GM23248 (cell line): ENCODE measurements at regions of chr4 and their contacts with region 1.

Region 1: DNA sequence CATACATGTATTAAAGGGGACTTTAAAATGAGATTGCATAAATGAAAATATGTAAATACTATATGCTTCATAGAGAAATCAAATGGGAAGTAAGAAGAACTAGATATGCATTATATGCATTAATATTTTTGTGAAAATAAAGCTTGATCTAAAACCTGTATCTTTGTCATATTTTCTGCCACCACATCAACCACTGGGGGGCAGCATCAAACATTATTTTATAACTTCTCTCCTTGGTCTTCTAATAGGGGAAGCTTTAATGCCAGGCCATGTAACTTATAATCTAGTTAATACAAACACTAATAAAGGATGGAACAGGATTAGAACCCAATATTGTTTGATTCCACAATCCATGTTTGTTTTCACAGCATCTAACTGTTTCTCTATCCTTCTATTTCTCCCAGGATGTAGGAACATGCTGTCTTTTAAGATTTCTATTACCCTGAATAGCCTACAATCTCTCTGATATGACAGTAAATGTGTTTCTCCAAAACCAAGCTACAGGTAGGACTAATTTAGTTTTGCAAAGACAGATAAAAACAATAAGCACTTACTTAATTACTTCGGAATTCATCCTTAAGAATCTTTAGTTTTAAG is 10.0 kb downstream of the QRFPR start:
- DNase-seq: peak; percentile 61
- H3K4me3 ChIP-seq: no peak overlapping the region
- H3K27ac ChIP-seq: no peak overlapping the region
- H3K4me1 ChIP-seq: no peaks in the 10 kb centered on the region
- H3K27me3 ChIP-seq: no peaks in the 10 kb centered on the region

Region 2: GRCh38 chr4:121041307-121042090 is 329.3 kb before region 1 on chr4:
- in situ Hi-C with region 1: no loop called
- DNase-seq: no peak
- H3K4me3 ChIP-seq: no peak overlapping the region
- H3K27ac ChIP-seq: no peak overlapping the region
- H3K4me1 ChIP-seq: no peaks in the 10 kb centered on the region
- H3K27me3 ChIP-seq: no peaks in the 10 kb centered on the region

Region 3: GRCh38 chr4:121252224-121252806 is 118.5 kb before region 1 on chr4:
- in situ Hi-C with region 1: no loop called
- DNase-seq: peak; percentile 76
- H3K4me3 ChIP-seq: no peak overlapping the region
- H3K27ac ChIP-seq: no peak overlapping the region
- H3K4me1 ChIP-seq: peaks cover 16% of the 10 kb centered on the region
- H3K27me3 ChIP-seq: no peaks in the 10 kb centered on the region

Region 4: GRCh38 chr4:121656269-121656641 is 285.4 kb after region 1 on chr4:
- in situ Hi-C with region 1: loop called (anchors 10 kb)
- DNase-seq: peak; percentile 69
- H3K4me3 ChIP-seq: no peak overlapping the region
- H3K27ac ChIP-seq: no peak overlapping the region
- H3K4me1 ChIP-seq: no peaks in the 10 kb centered on the region
- H3K27me3 ChIP-seq: no peaks in the 10 kb centered on the region

Region 5: DNA sequence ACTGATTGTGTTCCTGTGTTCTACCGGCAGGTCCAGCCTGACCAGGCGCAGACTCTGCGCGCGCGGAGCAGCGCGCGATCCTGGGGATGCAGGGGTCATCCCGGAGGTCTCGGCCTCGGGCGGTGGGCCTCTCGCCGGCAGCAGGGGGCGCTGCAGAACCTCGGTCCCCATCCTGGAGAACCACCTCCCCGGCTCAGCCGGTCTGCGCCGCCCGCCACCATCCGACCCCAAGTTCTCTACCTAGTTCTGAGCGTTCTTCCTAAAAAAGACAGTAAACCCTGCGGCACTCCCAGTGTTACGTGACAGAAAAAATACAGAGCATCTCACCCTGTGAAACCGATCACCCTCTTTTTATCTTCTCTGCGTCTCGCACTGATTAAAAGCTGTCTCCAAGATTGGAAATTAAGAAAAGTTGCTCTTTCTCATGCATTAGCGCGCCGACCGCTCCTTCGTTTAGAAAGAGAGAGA is 579.4 kb after region 1 on chr4:
- in situ Hi-C with region 1: no loop called
- DNase-seq: peak; percentile 65
- H3K4me3 ChIP-seq: peak overlapping the region; percentile 73
- H3K27ac ChIP-seq: no peak overlapping the region
- H3K4me1 ChIP-seq: no peaks in the 10 kb centered on the region
- H3K27me3 ChIP-seq: peaks cover 76% of the 10 kb centered on the region